ENCODE measurements at regions of chr1 and their contacts with region 1.

Region 1: DNA sequence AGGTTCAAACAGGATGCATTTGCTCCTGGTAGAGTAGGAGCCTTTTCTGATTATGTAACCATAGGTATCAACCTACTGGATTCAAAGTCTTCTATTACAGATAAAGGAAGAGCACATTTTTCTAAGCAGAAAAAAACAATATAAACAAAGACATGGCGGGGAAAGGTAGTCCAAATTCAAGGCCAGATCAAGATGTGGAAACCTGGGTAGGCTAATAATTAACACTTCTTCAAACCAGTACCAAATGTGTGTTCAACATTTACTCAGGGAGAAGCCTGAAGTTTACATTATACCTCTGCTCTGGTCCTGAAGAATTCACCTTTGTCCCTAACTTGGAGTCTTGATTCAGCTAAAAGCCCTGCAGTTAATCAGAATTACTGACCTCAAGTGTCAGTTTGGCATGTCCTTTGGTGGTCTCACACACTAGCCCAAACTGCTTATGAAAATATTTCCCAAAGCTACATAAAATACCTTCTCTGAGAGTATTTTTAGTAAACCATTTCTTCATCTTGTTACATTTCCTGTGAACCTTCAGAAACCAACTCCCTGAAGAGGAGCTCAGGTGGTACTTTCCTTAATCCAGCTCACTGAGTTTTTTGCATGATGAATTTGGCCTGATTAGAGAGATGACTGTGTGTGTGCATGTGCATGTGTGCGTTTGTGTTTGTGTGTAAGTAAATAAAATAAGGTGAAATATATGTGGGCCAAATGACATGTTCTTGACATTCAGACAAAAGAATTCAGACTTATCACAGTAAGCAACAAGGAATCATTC is 70.2 kb downstream of the TOR3A start:
- DNase-seq: no peak
- H3K4me3 ChIP-seq: no peak overlapping the region
- H3K27ac ChIP-seq: no peak overlapping the region
- H3K4me1 ChIP-seq: peaks cover 1% of the 10 kb centered on the region
- H3K27me3 ChIP-seq: no peaks in the 10 kb centered on the region
- CTCF ChIP-seq: no peak

Region 2: GRCh38 chr1:179164494-179164893 is 12.4 kb after region 1 on chr1:
- CTCF ChIA-PET with region 1: no interaction called
- POLR2A ChIA-PET with region 1: no interaction called
- intact Hi-C with region 1: loop called (anchors 2 kb)
- DNase-seq: no peak
- H3K4me3 ChIP-seq: no peak overlapping the region
- H3K27ac ChIP-seq: no peak overlapping the region
- H3K4me1 ChIP-seq: peaks cover 13% of the 10 kb centered on the region
- H3K27me3 ChIP-seq: no peaks in the 10 kb centered on the region
- CTCF ChIP-seq: no peak

Region 3: DNA sequence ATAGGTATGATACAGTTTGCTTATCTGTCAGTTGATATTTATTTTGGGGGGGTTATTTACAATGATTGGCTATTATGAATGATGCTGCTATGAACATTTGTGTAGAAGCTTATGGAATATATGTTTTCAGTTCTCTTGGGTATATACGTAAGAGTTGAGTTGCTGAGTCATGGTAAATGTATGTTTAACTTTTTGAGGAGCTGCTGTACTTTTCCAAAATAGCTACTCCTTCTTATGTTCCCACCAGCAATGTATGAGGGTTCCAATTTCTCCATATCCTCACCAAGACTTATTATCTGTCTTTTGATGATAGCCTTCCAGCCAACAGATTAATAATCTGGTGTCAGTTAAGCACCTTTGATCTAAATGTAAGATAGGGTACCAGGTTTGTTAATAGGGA is 153.4 kb after region 1 on chr1:
- CTCF ChIA-PET with region 1: no interaction called
- POLR2A ChIA-PET with region 1: no interaction called
- intact Hi-C with region 1: no loop called
- DNase-seq: no peak
- H3K4me3 ChIP-seq: no peak overlapping the region
- H3K27ac ChIP-seq: no peak overlapping the region
- H3K4me1 ChIP-seq: peaks cover 4% of the 10 kb centered on the region
- H3K27me3 ChIP-seq: no peaks in the 10 kb centered on the region
- CTCF ChIP-seq: no peak

Region 4: DNA sequence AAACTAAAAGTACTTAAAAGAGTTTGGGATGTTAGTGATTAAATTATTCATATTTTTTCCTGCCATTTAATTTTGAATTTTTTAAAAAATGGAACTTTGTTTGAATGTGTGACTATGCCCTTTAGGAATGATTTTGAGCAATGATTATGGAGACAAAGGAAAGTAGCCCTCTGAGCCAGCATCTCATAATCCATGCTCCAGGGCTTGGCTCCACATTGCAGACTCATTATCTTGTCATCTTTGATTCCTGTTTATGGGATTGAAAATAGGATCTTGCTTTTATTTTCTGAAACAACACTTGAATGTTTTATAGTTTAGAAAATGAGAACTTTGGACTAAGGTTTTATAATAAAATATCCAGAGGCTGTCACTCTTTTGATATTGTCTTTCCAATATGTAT is 228.2 kb after region 1 on chr1:
- CTCF ChIA-PET with region 1: no interaction called
- POLR2A ChIA-PET with region 1: no interaction called
- intact Hi-C with region 1: no loop called
- DNase-seq: no peak
- H3K4me3 ChIP-seq: no peak overlapping the region
- H3K27ac ChIP-seq: no peak overlapping the region
- H3K4me1 ChIP-seq: no peaks in the 10 kb centered on the region
- H3K27me3 ChIP-seq: no peaks in the 10 kb centered on the region
- CTCF ChIP-seq: no peak

Measured in A673 (cell line).